ENCODE measurements at regions of chr16 and their contacts with region 1.

Region 1: DNA sequence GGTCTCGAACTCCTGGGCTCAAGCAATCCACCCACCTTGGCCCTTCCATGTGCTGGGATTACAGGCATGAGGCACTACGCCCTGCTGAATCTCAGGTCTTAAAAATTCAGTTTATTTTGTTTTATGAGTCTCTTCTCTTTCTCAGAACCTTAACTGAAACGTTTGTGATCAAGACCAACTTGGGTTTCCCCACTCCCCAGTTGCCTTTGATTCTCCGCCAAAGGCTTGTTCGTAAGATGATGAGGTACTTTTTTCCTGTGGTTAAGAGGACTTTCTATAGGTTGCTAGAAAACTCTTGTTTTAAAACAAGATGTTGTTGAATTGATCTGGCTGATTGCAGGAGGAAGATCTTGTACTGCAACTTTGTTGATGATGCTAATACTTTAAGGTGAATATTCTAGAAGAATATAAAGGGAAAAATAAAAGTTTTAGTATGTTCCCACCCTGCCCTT is 11.7 kb downstream of the ABCC1 start:
- DNase-seq: peak; percentile 85
- ATAC-seq: peak; percentile 88
- H3K4me3 Mint-ChIP-seq: peak overlapping the region; percentile 75
- H3K27ac Mint-ChIP-seq: peak overlapping the region; percentile 99
- H3K4me1 Mint-ChIP-seq: peaks cover 81% of the 10 kb centered on the region
- H3K27me3 Mint-ChIP-seq: no peaks in the 10 kb centered on the region

Region 2: GRCh38 chr16:15581127-15581815 is 379.8 kb before region 1 on chr16:
- CTCF ChIA-PET with region 1: no interaction called
- POLR2A ChIA-PET with region 1: no interaction called
- intact Hi-C with region 1: no loop called
- DNase-seq: no peak
- ATAC-seq: no peak
- H3K4me3 Mint-ChIP-seq: no peak overlapping the region
- H3K27ac Mint-ChIP-seq: no peak overlapping the region
- H3K4me1 Mint-ChIP-seq: no peaks in the 10 kb centered on the region
- H3K27me3 Mint-ChIP-seq: no peaks in the 10 kb centered on the region

Region 3: GRCh38 chr16:15899538-15900100 is 61.5 kb before region 1 on chr16:
- CTCF ChIA-PET with region 1: no interaction called
- POLR2A ChIA-PET with region 1: no interaction called
- intact Hi-C with region 1: loop called in 1 of 2 experiments (anchors 2 kb)
- DNase-seq: peak; percentile 70
- ATAC-seq: peak; percentile 81
- H3K4me3 Mint-ChIP-seq: no peak overlapping the region
- H3K27ac Mint-ChIP-seq: no peak overlapping the region
- H3K4me1 Mint-ChIP-seq: peaks cover 24% of the 10 kb centered on the region
- H3K27me3 Mint-ChIP-seq: no peaks in the 10 kb centered on the region

Region 4: DNA sequence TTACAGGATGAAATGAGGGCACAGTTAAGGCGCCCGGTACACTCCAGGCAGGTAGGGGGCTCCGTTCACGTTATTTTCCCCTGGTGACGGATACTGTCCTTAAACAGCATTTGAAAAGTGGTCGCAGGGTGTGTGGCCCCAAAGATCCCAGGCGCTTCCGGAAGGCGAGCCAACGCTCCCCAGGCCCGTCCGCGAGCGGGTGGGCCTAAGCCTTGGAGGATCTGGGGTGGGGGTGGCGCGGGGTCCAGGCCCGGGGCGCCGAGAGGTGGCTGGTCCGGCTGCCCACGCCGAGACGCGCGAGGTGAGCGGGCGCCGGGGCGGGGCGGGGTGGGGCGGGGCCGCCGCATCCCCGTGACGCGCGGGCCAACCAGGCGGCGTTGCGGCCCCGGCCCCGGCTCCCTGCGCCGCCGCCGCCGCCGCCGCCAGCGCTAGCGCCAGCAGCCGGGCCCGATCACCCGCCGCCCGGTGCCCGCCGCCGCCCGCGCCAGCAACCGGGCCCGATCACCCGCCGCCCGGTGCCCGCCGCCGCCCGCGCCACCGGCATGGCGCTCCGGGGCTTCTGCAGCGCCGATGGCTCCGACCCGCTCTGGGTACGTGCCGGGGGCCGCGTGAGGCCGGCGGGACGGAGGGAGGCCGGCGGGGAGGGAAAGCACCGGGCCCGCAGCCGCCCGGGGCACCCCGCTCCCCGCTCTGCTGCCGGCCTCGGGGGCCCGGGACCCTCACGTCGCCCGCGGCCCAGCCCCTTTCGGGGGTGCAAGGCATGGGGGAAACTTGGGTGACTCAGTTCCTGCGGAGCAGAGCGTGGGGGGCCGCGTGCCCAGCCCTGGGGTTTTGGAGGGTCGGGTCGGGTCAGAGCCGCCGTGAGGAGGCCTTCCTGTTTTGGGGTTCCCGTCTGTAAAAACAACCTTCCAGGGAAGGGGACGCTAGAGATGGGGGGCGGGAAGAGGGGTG is 11.6 kb before region 1 on chr16 and contains the start of gene ABCC1:
- CTCF ChIA-PET with region 1: interaction called, 5 read pairs
- POLR2A ChIA-PET with region 1: interaction called, 4 read pairs
- intact Hi-C with region 1: loop called (anchors 1 kb)
- DNase-seq: peak; percentile 73
- ATAC-seq: peak; percentile 69
- H3K4me3 Mint-ChIP-seq: peak within 1 kb of the TSS; percentile 95
- H3K27ac Mint-ChIP-seq: peak within 1 kb of the TSS; percentile 100
- H3K4me1 Mint-ChIP-seq: peaks cover 51% of the 10 kb centered on the region
- H3K27me3 Mint-ChIP-seq: no peaks in the 10 kb centered on the region
- total RNA-seq, gene ABCC1: 57.8 to 65.1 TPM

Region 5: GRCh38 chr16:15996432-15997109 is 35.5 kb after region 1 on chr16:
- CTCF ChIA-PET with region 1: no interaction called
- POLR2A ChIA-PET with region 1: no interaction called
- intact Hi-C with region 1: loop called in 1 of 2 experiments (anchors 5 kb)
- DNase-seq: no peak
- ATAC-seq: no peak
- H3K4me3 Mint-ChIP-seq: no peak overlapping the region
- H3K27ac Mint-ChIP-seq: peak overlapping the region; percentile 58
- H3K4me1 Mint-ChIP-seq: peaks cover 35% of the 10 kb centered on the region
- H3K27me3 Mint-ChIP-seq: no peaks in the 10 kb centered on the region

Region 6: DNA sequence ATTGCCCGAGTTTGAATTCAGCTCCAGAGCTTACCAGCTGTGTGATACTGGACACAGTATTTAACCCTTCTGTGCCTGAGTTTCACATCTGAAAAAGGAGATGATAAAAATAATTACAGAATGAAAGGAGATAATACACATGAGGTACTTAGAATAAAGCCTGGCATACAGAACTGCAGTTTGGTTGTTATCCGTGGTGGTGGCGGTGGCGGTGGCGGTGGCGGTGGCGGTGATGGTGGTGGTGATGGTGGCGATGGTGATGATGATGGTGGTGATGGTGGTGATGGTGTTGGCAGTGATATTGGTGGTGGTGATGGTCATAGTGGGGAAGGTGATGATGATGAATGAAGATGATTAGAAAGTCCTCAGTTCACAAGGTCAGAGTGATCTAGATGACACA is 45.6 kb after region 1 on chr16:
- CTCF ChIA-PET with region 1: no interaction called
- POLR2A ChIA-PET with region 1: no interaction called
- intact Hi-C with region 1: no loop called
- DNase-seq: no peak
- ATAC-seq: no peak
- H3K4me3 Mint-ChIP-seq: no peak overlapping the region
- H3K27ac Mint-ChIP-seq: no peak overlapping the region
- H3K4me1 Mint-ChIP-seq: peaks cover 19% of the 10 kb centered on the region
- H3K27me3 Mint-ChIP-seq: no peaks in the 10 kb centered on the region

Region 7: DNA sequence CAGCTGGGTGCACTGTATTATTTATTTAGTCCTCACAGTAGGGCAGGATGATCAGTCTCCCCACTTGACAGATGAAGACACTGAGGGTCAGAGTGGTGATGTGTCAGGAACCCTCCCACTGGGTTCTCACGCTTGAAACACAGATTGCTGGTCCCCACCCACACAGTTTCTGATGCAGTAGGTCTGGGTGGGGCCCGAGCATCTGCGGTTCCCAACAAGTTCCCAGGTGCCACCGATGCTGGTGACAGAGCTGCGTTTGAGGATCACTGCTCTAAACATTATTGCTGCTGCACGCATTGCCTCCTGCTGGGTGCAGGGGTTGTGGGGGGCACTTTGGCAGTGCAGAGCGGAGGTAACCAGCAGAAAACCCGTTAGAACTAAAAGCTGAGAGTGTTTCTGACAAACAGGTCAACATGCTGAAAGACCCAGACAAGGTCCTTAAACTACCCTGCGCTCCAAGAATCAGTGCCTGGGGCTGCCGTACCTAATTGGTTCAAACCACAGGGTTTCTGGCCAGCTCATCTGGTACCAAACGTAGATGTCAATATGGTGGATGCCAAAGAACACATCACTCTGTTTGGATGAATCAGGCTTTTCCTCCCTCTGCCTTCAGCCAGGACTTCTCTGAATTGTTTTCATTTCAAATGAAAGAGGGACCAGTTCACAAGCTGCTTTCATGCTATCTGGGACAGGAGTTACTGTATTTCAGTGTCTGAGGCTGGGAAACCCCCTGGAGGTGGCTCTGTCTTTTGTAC is 64.3 kb after region 1 on chr16:
- CTCF ChIA-PET with region 1: no interaction called
- POLR2A ChIA-PET with region 1: no interaction called
- intact Hi-C with region 1: loop called (anchors 1 to 5 kb)
- DNase-seq: peak; percentile 78
- ATAC-seq: peak; percentile 91
- H3K4me3 Mint-ChIP-seq: peak overlapping the region; percentile 30
- H3K27ac Mint-ChIP-seq: peak overlapping the region; percentile 78
- H3K4me1 Mint-ChIP-seq: peaks cover 36% of the 10 kb centered on the region
- H3K27me3 Mint-ChIP-seq: no peaks in the 10 kb centered on the region

Measured in activated CD4-positive, alpha-beta T cell treated with anti-CD3 and anti-CD28 coated beads for 36 hours (primary cell).